CD4-positive, alpha-beta T cell (primary cell): ENCODE measurements at regions of chr6 and their contacts with region 1.

Region 1: DNA sequence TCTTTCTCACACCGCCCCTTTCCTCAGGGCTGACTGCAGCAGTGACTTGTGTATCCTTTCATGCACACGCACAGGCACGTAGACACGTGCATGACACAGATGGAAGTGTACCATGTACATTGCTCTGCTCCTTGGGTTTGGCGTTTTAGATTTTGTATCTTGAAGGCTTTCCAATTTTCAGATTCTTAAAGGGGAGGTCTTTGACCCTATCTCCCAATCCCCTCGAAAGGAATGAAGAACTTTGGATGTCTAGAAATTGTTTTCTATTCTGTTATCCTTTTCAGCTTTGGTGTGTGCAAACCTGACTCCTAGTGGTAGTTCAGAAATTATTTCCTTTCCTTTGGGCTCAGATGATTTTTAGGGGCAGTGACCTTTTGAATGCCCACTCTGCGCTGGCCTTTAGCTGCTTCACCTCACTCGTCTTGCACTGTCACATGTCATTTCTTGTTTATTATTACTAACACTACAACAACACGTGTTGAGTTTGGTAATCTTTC is 63.0 kb downstream of the HIVEP1 start:
- DNase-seq: peak in 5 of 14 experiments; percentile 7 to 53 (median 29)
- ATAC-seq: peak; percentile 91
- H3K4me3 ChIP-seq: no peak overlapping the region
- H3K4me3 Mint-ChIP-seq: no peak overlapping the region
- H3K27ac ChIP-seq: no peak overlapping the region
- H3K27ac Mint-ChIP-seq: no peak overlapping the region
- H3K4me1 ChIP-seq: peaks cover 5% of the 10 kb centered on the region
- H3K4me1 Mint-ChIP-seq: peaks cover 66% of the 10 kb centered on the region
- H3K27me3 ChIP-seq: no peaks in the 10 kb centered on the region
- H3K27me3 Mint-ChIP-seq: no peaks in the 10 kb centered on the region
- CTCF ChIP-seq: peak; percentile 60

Region 2: DNA sequence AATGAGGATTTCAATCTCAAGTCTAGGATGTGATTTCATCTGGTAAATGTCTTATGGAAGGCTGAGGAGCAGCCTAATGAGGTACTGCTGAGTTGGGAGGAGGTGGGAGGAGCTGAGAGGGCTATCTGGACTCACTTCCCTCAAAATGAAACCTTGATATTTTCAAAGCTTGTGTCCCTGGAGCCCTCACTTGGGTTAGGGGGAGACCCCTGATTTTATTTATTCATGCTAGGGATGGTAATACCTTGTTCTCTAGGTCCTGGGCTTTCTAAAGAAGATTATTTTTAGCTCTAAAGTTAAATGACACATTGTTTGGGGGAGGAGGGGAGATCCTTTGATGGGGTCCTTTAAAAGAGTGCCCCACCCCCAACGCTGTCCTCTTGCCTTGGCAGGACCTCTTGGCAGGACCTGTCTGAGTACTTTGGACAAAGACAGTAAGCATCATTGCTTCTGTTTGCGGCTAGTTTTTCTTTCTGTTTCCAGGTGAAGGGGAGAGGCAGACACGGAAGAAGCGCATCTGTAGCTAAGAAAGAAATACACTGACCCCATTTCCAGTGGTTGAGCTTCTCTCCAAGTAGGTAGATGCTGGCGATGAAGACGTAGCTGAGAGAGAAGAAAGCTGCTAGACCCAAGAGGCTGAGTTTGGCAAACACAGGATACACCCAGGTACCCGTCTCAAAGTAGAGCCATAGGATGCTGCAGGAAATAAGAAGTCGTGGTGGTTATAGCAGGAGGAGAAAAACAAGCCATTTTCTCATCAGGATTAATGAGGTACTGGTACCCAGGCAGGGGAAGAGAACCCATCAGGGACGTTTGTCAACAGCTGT is 352.1 kb before region 1 on chr6:
- CTCF ChIA-PET with region 1: no interaction called
- POLR2A ChIA-PET with region 1: no interaction called
- intact Hi-C with region 1: loop called in 1 of 2 experiments (anchors 10 kb)
- DNase-seq: peak in 2 of 14 experiments; percentile 32 to 44
- ATAC-seq: peak; percentile 45
- H3K4me3 ChIP-seq: no peak overlapping the region
- H3K4me3 Mint-ChIP-seq: peak overlapping the region; percentile 14
- H3K27ac ChIP-seq: peak overlapping the region in 1 of 2 donors; percentile 18
- H3K27ac Mint-ChIP-seq: peak overlapping the region; percentile 58
- H3K4me1 ChIP-seq: peaks cover 33% of the 10 kb centered on the region
- H3K4me1 Mint-ChIP-seq: peaks cover 53% of the 10 kb centered on the region
- H3K27me3 ChIP-seq: no peaks in the 10 kb centered on the region
- H3K27me3 Mint-ChIP-seq: no peaks in the 10 kb centered on the region
- CTCF ChIP-seq: no peak